ENCODE measurements at regions of chr6 and their contacts with region 1.

Region 1: DNA sequence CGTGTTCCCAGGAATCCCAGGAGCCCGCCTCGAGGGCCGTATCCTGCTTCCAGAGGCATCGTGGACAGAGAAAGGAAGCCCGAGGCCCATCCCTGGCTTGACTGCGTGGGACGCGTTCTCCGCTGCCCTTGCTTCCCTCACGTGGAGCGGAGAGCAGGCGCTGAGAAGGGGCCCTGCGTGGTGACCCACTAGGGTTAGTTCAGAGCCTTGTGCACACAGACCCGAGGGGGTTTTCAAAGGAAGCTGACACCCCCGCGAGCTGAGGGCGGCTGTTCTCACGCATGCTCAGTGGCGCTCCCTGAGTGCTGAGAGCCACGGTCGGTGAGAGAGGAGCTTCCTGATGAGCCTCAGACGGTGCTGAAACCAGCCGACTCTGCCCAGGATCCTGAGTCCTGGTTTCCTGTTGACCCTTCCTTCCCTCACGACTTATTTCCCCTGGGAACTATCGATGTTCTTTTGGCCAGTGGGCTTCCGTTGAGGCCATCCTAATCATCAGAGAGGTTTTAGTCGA is 28.9 kb upstream of the CCR6 start:
- H3K4me3 Mint-ChIP-seq: peak overlapping the region; percentile 23
- H3K27ac Mint-ChIP-seq: peak overlapping the region; percentile 88
- H3K4me1 Mint-ChIP-seq: peaks cover 71% of the 10 kb centered on the region
- H3K27me3 Mint-ChIP-seq: peaks cover 7% of the 10 kb centered on the region

Region 2: DNA sequence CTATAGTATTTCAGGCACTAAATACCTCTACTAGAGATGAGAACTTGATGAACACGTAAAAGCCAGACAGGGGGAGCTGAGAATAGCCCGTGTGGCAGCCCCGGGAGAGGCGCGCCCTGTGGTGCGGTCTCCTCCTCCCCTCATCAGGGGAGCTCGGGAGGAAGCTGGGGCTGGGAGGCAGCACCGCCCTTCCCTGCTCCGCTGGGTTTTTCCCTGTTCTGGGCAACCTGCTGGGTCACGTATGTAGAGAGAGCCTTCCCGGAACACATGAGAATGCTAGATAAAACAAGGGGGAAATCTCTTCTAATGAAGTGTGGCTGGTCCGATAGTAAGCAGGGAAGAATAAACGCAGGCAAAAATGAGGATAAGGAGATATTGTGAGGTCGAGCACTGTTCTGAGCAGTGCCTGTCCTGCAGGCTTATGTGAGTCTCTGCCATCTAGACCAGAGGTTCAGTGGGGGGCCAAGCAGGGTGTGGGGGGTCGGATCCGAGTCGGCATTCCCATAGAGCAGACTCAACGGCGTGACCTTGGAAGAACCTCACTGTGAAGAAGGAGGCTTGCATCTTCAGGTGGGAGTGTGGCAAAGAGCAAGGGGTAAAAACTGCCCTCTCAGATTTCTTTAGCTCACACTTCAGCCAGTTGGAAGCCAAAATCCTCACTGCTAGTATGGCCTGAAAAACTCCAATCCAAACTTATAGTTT is 453.5 kb before region 1 on chr6:
- intact Hi-C with region 1: no loop called
- H3K4me3 Mint-ChIP-seq: peak overlapping the region; percentile 39
- H3K27ac Mint-ChIP-seq: peak overlapping the region; percentile 34
- H3K4me1 Mint-ChIP-seq: peaks cover 23% of the 10 kb centered on the region
- H3K27me3 Mint-ChIP-seq: peaks cover 29% of the 10 kb centered on the region

Region 3: GRCh38 chr6:166999145-166999883 is 94.7 kb before region 1 on chr6 and contains the start of gene CEP43:
- intact Hi-C with region 1: loop called (anchors 10 kb)
- H3K4me3 Mint-ChIP-seq: peak within 1 kb of the TSS; percentile 88
- H3K27ac Mint-ChIP-seq: peak within 1 kb of the TSS; percentile 76
- H3K4me1 Mint-ChIP-seq: peaks cover 32% of the 10 kb centered on the region
- H3K27me3 Mint-ChIP-seq: no peaks in the 10 kb centered on the region

Region 4: DNA sequence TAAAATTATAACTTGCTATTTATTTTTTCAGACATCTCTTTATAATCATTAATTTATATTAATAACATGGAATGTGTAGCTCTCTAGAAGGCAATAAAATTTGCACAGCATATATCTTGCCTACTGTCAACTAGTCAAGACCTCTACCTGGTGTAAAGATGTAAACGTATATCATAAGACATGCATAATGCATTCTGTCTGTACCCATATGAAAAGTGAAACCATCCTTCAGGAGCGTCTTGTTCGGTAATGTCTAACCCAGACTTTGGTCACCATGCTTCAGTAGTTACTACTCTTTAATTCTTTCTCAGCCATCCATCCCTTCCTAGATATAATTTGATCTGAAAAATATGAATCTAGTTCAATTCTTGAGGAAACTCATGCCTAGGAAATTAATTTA is 73.8 kb before region 1 on chr6:
- intact Hi-C with region 1: no loop called
- H3K4me3 Mint-ChIP-seq: no peak overlapping the region
- H3K27ac Mint-ChIP-seq: no peak overlapping the region
- H3K4me1 Mint-ChIP-seq: no peaks in the 10 kb centered on the region
- H3K27me3 Mint-ChIP-seq: no peaks in the 10 kb centered on the region

Region 5: DNA sequence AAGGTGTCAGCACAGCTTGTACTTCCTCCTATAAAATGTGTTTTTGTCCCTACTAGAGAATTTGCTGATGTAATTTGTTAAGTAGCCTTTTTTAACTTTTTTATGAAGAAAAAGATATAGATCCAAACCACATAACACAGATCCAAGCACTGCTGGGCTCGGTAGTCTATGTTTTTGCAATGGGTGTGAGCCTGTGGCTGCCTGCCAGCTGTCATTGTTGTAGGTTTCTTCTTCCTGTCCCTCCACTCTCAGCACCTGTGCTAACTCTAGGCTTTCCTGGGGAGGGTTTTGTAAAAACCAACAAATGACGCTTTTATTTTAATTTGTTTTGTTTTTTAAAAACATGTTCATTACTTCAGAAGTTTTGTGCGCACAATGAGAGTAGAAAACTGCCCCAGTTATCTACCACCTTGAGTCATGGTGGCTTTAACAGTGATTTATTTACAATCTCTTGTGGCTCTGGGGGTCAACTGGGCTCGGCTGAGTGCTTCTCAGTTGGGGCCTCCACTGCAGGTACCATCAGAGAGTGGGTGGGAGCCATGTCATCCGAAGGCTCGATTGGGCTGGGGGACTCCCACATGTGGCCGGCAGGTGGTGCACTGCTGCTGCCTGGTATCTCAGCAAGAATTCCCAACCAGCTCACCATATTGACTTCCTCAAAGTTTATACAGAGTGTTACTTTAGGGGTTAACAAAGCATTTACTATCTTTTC is 25.8 kb after region 1 on chr6:
- intact Hi-C with region 1: loop called (anchors 5 kb)
- H3K4me3 Mint-ChIP-seq: no peak overlapping the region
- H3K27ac Mint-ChIP-seq: peak overlapping the region; percentile 74
- H3K4me1 Mint-ChIP-seq: peaks cover 32% of the 10 kb centered on the region
- H3K27me3 Mint-ChIP-seq: peaks cover 10% of the 10 kb centered on the region

Measured in dendritic cell treated with granulocyte-macrophage colony-stimulating factor and Interleukin-4, amounts not matched to agents 40 ng/mL and 50 ng/mL, for 4 days (primary cell).